ENCODE measurements at regions of chr10 and their contacts with region 1.

Region 1: DNA sequence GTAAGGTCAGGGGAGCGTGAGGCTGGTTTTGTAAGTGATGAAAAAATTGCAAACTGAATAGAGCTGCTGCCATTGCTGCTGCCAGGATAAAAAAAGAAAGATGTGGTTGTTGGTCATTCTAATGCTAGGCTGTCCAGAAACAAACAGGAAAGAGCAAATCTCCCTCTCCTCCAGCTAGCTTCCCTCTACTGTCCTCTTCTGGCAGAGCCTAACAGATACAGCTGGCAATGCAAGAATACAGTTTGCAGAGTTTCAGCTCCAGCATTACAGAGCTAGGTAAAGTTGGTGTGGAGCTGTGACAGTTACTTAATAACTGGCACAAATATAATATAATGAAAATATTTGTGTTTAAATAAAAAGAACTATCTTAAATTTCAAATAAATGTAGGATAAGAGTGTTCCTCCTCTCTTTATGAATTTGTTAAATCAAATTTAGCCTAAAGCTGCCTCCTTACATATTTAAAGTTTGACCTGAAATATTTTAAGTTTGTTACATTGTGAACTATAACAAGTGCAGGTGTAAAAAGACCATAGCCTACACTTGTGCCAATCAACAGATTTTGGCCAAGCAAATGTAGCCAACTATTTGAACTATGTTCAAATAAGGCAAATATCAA is 407.7 kb downstream of the SH2D4B start:
- DNase-seq: no peak
- ATAC-seq: peak; percentile 98
- H3K4me3 Mint-ChIP-seq: no peak overlapping the region
- H3K27ac Mint-ChIP-seq: no peak overlapping the region
- H3K4me1 Mint-ChIP-seq: peaks cover 48% of the 10 kb centered on the region
- H3K27me3 Mint-ChIP-seq: no peaks in the 10 kb centered on the region; the same call in 1 of the 2 replicates
- CTCF ChIP-seq: peak; percentile 45; the same call in 1 of the 2 replicates

Region 2: DNA sequence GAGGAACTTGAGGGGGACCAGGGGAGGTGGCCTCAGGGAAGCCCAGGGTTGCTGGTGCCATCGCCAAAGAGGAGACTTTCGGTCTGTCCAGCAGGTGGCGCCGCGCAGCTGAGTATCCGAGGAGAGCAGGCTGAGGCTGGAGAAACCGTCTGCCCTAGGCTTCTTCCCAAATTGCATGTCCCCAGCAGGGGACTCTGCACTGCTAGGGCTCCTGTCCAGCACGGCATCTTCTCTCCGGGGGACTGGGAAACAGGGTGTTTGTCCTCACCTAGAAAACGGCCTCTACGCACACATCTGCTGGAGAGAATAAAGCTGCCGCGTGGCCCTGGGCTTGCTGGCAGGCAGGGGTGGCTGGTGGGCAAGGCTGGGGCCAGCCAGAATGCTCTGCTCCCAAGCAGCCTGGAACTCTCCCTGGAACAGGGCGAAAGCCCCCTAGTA is 245.8 kb before region 1 on chr10:
- CTCF ChIA-PET with region 1: interaction called, 46 read pairs
- POLR2A ChIA-PET with region 1: no interaction called
- DNase-seq: peak; percentile 95
- ATAC-seq: peak; percentile 93
- H3K4me3 Mint-ChIP-seq: no peak overlapping the region
- H3K27ac Mint-ChIP-seq: no peak overlapping the region
- H3K4me1 Mint-ChIP-seq: peaks cover 26% of the 10 kb centered on the region
- H3K27me3 Mint-ChIP-seq: no peaks in the 10 kb centered on the region
- CTCF ChIP-seq: peak; percentile 84

Region 3: GRCh38 chr10:80855348-80855971 is 89.9 kb before region 1 on chr10:
- CTCF ChIA-PET with region 1: interaction called, 34 read pairs
- POLR2A ChIA-PET with region 1: no interaction called
- DNase-seq: peak; percentile 71
- ATAC-seq: peak; percentile 99
- H3K4me3 Mint-ChIP-seq: no peak overlapping the region
- H3K27ac Mint-ChIP-seq: no peak overlapping the region
- H3K4me1 Mint-ChIP-seq: peaks cover 20% of the 10 kb centered on the region
- H3K27me3 Mint-ChIP-seq: peaks cover 4% of the 10 kb centered on the region; the same call in 1 of the 2 replicates
- CTCF ChIP-seq: 0 out of 2 replicates have a peak, but pooled peaks have one; percentile 27

Region 4: GRCh38 chr10:81018708-81019365 is 73.5 kb after region 1 on chr10:
- CTCF ChIA-PET with region 1: interaction called, 10 read pairs
- POLR2A ChIA-PET with region 1: no interaction called
- DNase-seq: peak; percentile 51
- ATAC-seq: peak; percentile 93; the same call in 1 of the 2 replicates
- H3K4me3 Mint-ChIP-seq: no peak overlapping the region
- H3K27ac Mint-ChIP-seq: no peak overlapping the region
- H3K4me1 Mint-ChIP-seq: peaks cover 4% of the 10 kb centered on the region
- H3K27me3 Mint-ChIP-seq: no peaks in the 10 kb centered on the region
- CTCF ChIP-seq: peak; percentile 48

Region 5: GRCh38 chr10:81108516-81109199 is 163.3 kb after region 1 on chr10:
- CTCF ChIA-PET with region 1: no interaction called
- POLR2A ChIA-PET with region 1: no interaction called
- DNase-seq: no peak
- ATAC-seq: no peak
- H3K4me3 Mint-ChIP-seq: no peak overlapping the region
- H3K27ac Mint-ChIP-seq: no peak overlapping the region
- H3K4me1 Mint-ChIP-seq: no peaks in the 10 kb centered on the region
- H3K27me3 Mint-ChIP-seq: no peaks in the 10 kb centered on the region
- CTCF ChIP-seq: no peak